Mammary epithelial cell (primary cell): ENCODE measurements at regions of chr3 and their contacts with region 1.

Region 1: DNA sequence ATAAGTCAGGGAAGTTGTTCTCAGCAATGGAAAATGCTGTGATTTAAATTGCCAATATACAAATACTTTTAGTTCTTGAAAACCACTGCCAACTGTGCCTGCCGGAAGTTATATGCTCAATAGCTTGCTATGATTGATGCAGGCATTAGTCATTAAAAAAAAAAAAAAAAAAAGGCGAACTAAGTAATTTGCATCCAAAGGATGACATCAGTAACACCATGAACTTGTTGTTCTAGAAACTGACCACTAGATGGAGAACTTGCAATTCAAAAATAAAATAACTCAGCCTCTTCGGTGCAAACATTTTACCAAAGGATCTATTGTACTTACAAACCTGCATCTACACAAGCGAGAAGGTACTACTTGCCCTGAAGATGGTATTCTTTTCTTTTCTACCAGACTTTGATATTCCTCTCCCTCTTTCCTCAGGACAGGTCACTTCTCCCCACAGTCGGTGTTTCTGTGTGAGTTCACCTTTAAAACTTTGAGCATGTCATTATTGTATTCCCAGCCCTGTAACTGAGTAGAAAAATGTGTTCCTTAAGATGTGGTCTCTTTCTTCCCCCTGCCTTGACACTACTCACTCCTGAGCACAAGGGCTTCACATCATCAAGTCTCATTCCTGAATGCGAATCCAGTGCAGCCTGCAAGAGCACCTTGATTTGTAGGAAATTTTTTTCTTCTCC is 115.0 kb upstream of the VEPH1 start:
- DNase-seq: peak; percentile 79
- H3K4me3 ChIP-seq: no peak overlapping the region
- H3K27ac ChIP-seq: no peak overlapping the region
- H3K4me1 ChIP-seq: peaks cover 4% of the 10 kb centered on the region
- H3K27me3 ChIP-seq: no peaks in the 10 kb centered on the region
- CTCF ChIP-seq: peak; percentile 57 to 61

Region 2: DNA sequence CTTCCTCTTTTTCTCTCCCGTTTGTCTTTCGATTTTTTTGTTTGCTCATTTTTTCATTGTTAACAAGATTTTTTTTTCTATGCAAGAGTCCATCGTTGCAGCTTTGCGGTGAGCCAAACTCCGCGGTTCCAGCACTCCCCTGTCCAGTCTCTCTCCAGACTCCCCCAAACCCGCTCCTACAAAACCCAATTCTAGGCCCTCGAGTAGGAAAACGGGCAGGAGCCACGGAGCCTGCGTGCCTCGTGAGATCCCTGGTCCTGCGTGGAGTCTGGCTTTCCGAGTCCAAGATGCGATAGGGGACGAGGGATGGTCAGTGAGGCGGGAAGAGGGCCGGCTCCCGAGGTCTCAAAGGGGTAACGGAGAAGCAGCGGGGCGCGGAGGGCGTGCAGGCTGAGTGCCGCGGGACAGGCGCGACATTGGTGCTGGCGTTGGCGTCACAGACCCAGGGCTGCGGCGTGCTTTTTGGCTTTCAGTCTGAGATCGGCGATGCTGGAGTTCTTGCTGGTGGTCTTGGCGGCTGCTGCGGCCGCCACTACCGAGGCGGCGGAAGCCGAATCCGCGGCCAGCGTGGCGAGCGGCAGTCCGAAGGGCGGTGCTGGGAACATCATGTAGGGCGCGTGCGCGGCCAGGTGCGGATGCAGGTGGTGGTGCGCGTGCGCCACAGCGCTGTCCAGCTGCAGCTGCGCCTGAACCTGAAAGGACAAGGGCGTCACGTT is 479.5 kb after region 1 on chr3:
- CTCF ChIA-PET with region 1: no interaction called
- dilution Hi-C with region 1: no loop called
- in situ Hi-C with region 1: no loop called
- intact Hi-C with region 1: loop called (anchors 5 kb)
- DNase-seq: peak; percentile 80
- H3K4me3 ChIP-seq: peak overlapping the region; percentile 47 to 84 (median 68)
- H3K27ac ChIP-seq: no peak overlapping the region
- H3K4me1 ChIP-seq: peaks cover 6% of the 10 kb centered on the region
- H3K27me3 ChIP-seq: peaks cover 58% of the 10 kb centered on the region
- CTCF ChIP-seq: no peak